ENCODE measurements at regions of chr1 and their contacts with region 1.

Region 1: DNA sequence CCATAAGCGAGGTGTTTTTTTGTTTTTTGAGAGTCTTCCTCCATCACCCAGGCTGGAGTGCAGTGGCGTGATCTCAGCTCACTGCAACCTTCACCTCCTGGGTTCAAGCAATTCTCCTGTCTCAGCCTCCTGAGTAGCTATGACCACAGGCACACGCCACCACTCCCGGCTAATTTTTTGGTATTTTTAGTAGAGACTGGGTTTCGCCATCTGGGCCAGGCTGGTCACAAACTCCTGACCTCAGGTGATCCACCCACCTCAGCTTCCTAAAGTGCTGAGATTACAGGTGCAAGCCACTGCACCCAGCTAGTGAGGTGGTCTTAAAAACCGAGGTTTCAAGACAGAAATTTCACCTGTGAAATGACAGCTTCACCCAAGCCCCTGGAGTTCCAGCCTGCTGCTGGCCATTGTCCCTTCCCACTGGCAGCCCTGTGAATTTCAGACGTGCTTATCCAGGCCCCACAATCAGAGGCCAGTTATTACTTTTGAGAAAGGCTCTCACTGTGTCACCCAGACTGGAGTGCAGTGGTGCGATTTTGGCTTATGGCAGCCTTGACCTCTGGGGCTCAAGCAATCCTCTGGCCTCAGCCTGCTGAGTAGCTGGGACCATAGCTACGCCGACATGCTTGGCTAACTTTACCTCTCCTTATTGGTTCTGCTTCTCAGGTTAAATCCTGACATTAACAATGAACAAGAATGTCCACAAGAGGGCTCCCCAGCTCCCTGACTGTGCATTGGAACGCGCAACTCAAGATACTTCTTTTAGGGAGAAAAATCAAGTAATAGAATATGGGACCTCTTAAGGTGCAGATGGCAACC is 19.4 kb downstream of the ENO1 start:
- DNase-seq: peak; percentile 43 to 83 (median 58)
- ATAC-seq: peak; percentile 74
- H3K4me3 ChIP-seq: no peak overlapping the region
- H3K27ac ChIP-seq: peak overlapping the region; percentile 48; the same call in 2 of the 3 replicates
- H3K4me1 ChIP-seq: peaks cover 13% of the 10 kb centered on the region in 2 experiments
- H3K27me3 ChIP-seq: no peaks in the 10 kb centered on the region
- CTCF ChIP-seq: peak; percentile 75 to 88 (median 86)
- EP300 ChIP-seq: no peak
- POLR2A ChIP-seq: peak; percentile 61; the same call in 1 of the 2 replicates
- RAD21 ChIP-seq: peak; percentile 41 to 72

Region 2: GRCh38 chr1:8789314-8790214 is 69.5 kb before region 1 on chr1:
- CTCF ChIA-PET with region 1: no interaction called
- POLR2A ChIA-PET with region 1: no interaction called
- in situ Hi-C with region 1: no loop called
- intact Hi-C with region 1: no loop called
- DNase-seq: peak; percentile 82 to 96 (median 88)
- ATAC-seq: peak; percentile 84
- H3K4me3 ChIP-seq: peak overlapping the region; percentile 14; the same call in 1 of the 2 replicates
- H3K27ac ChIP-seq: peak overlapping the region; percentile 98
- H3K4me1 ChIP-seq: peaks cover 34 to 50% of the 10 kb centered on the region in 2 experiments
- H3K27me3 ChIP-seq: no peaks in the 10 kb centered on the region
- CTCF ChIP-seq: no peak
- EP300 ChIP-seq: peak; percentile 96
- POLR2A ChIP-seq: peak; percentile 81
- RAD21 ChIP-seq: no peak

Region 3: GRCh38 chr1:8848663-8849386 is 10.3 kb before region 1 on chr1:
- CTCF ChIA-PET with region 1: no interaction called
- POLR2A ChIA-PET with region 1: interaction called, 99 read pairs
- in situ Hi-C with region 1: no loop called
- intact Hi-C with region 1: no loop called
- DNase-seq: peak; percentile 91 to 96 (median 94)
- ATAC-seq: peak; percentile 97
- H3K4me3 ChIP-seq: no peak overlapping the region
- H3K27ac ChIP-seq: no peak overlapping the region
- H3K4me1 ChIP-seq: peaks cover 7 to 20% of the 10 kb centered on the region in 2 experiments; a peak in 4 of 5 replicates
- H3K27me3 ChIP-seq: no peaks in the 10 kb centered on the region
- CTCF ChIP-seq: peak; percentile 93 to 99 (median 98)
- EP300 ChIP-seq: no peak
- POLR2A ChIP-seq: no peak
- RAD21 ChIP-seq: peak; percentile 92 to 98

Region 4: GRCh38 chr1:8878448-8879347 is 19.6 kb after region 1 on chr1 and contains the start of gene ENO1:
- CTCF ChIA-PET with region 1: no interaction called
- POLR2A ChIA-PET with region 1: interaction called, 219 read pairs
- in situ Hi-C with region 1: no loop called
- intact Hi-C with region 1: no loop called
- DNase-seq: peak; percentile 99 to 100 (median 100)
- ATAC-seq: peak; percentile 85
- H3K4me3 ChIP-seq: peak within 1 kb of the TSS; percentile 82
- H3K27ac ChIP-seq: peak within 1 kb of the TSS; percentile 99
- H3K4me1 ChIP-seq: peaks cover 30 to 37% of the 10 kb centered on the region in 2 experiments
- H3K27me3 ChIP-seq: no peaks in the 10 kb centered on the region
- CTCF ChIP-seq: no peak
- EP300 ChIP-seq: no peak; the same call in 1 of the 2 replicates
- POLR2A ChIP-seq: peak; percentile 99
- RAD21 ChIP-seq: no peak; a peak in 1 of 4 replicates
- polyA plus RNA-seq, gene ENO1: 6,249 to 7,472 TPM

Region 5: DNA sequence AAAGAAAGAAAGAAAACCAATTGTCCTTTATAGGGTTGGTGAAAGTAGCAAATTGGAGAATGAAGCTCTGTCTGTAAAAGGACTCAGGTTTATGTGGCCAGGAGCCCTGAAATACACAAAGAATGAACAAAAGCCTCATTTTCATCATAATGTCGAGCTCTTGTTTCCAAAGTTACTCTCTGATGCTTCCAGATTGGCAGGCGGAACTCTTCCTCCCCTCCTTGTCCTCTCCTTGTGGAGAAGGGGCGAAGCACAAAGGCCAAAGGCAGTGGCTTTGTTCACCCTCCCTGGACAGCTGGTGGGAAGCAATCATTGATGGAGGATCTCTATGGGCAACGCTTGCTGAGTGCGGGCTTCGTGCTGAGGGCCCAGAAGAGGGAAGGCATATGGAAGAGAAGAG is 92.1 kb after region 1 on chr1:
- CTCF ChIA-PET with region 1: no interaction called
- POLR2A ChIA-PET with region 1: no interaction called
- in situ Hi-C with region 1: no loop called
- intact Hi-C with region 1: no loop called
- DNase-seq: no peak
- ATAC-seq: no peak
- H3K4me3 ChIP-seq: no peak overlapping the region
- H3K27ac ChIP-seq: no peak overlapping the region
- H3K4me1 ChIP-seq: no peaks in the 10 kb centered on the region
- H3K27me3 ChIP-seq: peaks cover 31 to 61% of the 10 kb centered on the region in 2 experiments
- CTCF ChIP-seq: no peak
- EP300 ChIP-seq: no peak
- POLR2A ChIP-seq: no peak
- RAD21 ChIP-seq: no peak

Region 6: GRCh38 chr1:8965121-8965820 is 106.2 kb after region 1 on chr1:
- CTCF ChIA-PET with region 1: no interaction called
- POLR2A ChIA-PET with region 1: no interaction called
- in situ Hi-C with region 1: no loop called
- intact Hi-C with region 1: no loop called
- DNase-seq: no peak
- ATAC-seq: no peak
- H3K4me3 ChIP-seq: no peak overlapping the region
- H3K27ac ChIP-seq: no peak overlapping the region
- H3K4me1 ChIP-seq: no peaks in the 10 kb centered on the region
- H3K27me3 ChIP-seq: peaks cover 33 to 62% of the 10 kb centered on the region in 2 experiments
- CTCF ChIP-seq: no peak
- EP300 ChIP-seq: no peak
- POLR2A ChIP-seq: no peak
- RAD21 ChIP-seq: no peak

Region 7: GRCh38 chr1:8987881-8988617 is 129.0 kb after region 1 on chr1:
- CTCF ChIA-PET with region 1: interaction called, 5 read pairs
- POLR2A ChIA-PET with region 1: interaction called, 7 read pairs
- in situ Hi-C with region 1: no loop called
- intact Hi-C with region 1: loop called (anchors 2 kb)
- DNase-seq: peak; percentile 62 to 86 (median 80)
- ATAC-seq: peak; percentile 95
- H3K4me3 ChIP-seq: no peak overlapping the region
- H3K27ac ChIP-seq: no peak overlapping the region
- H3K4me1 ChIP-seq: no peaks in the 10 kb centered on the region
- H3K27me3 ChIP-seq: peaks cover 9 to 32% of the 10 kb centered on the region in 2 experiments
- CTCF ChIP-seq: peak; percentile 87 to 97 (median 91)
- EP300 ChIP-seq: no peak
- POLR2A ChIP-seq: no peak
- RAD21 ChIP-seq: peak; percentile 56 to 79

Region 8: DNA sequence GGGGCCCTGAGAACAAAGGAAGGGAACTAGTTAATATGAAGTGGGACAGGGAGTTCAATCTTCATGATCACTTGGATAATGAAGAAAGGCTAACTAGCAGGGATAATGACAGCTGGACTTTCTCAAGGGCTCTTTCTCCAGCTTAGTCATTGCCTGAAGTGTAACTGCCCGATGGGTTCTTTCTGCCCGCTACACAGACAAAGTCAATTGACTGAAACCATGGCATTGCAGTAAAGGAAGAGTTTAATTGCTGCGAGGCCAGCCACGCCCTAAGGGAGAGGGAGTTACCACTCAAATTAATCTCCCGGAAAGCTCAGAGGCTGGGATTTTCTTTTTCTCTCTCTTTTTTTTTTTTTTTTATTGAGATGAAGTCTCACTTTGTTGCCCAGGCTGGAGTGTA is 226.9 kb after region 1 on chr1:
- CTCF ChIA-PET with region 1: no interaction called
- POLR2A ChIA-PET with region 1: no interaction called
- in situ Hi-C with region 1: no loop called
- intact Hi-C with region 1: no loop called
- DNase-seq: no peak
- ATAC-seq: no peak
- H3K4me3 ChIP-seq: no peak overlapping the region
- H3K27ac ChIP-seq: no peak overlapping the region
- H3K4me1 ChIP-seq: no peaks in the 10 kb centered on the region
- H3K27me3 ChIP-seq: peaks cover 52 to 64% of the 10 kb centered on the region in 2 experiments; a peak in 4 of 5 replicates
- CTCF ChIP-seq: no peak
- EP300 ChIP-seq: no peak
- POLR2A ChIP-seq: no peak
- RAD21 ChIP-seq: no peak

Measured in K562 (cell line).